H1 (cell line): ENCODE measurements at regions of chr10 and their contacts with region 1.

Region 1: DNA sequence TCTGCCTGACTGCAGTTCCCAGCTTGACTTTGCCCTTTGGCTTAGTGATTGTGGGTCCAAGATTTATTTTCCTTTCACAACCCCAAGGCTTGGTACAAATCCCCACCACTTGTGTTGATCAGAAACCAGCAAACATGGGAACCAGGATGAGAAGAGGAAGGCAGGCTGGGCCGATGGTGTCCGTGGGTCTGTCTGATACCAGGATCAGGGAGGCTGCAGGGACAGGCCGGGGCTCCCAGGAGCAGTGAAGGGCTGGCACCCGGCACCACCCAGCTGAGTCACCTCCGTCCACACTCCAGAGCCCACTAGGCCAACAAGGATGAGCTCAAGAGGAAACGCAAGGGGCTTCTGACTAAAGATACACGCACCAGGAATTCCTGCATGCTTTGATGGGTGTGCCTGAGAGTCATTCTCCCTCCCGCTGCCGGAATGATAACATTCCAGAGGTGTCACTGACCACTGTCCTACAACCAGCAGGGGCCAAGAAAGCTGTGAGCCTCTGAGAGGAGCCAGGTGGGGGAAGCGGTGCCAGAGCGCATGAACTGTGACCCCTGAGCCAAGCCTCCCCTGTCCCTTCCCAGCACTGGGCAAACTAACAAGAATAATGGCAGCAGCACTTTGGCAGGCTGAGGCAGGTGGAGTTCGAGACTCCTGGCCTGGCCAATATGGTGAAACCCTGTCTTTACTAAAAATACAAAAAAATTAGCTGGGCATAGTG is 29.2 kb upstream of the PROSER2 start:
- DNase-seq: no peak
- H3K4me3 ChIP-seq: no peak overlapping the region
- H3K27ac ChIP-seq: no peak overlapping the region
- H3K4me1 ChIP-seq: peaks cover 0 to 3% (median 0%) of the 10 kb centered on the region in 4 experiments; a peak in 1 of 7 replicates
- H3K27me3 ChIP-seq: no peaks in the 10 kb centered on the region
- CTCF ChIP-seq: no peak
- EP300 ChIP-seq: no peak
- POLR2A ChIP-seq: no peak
- RAD21 ChIP-seq: no peak

Region 2: DNA sequence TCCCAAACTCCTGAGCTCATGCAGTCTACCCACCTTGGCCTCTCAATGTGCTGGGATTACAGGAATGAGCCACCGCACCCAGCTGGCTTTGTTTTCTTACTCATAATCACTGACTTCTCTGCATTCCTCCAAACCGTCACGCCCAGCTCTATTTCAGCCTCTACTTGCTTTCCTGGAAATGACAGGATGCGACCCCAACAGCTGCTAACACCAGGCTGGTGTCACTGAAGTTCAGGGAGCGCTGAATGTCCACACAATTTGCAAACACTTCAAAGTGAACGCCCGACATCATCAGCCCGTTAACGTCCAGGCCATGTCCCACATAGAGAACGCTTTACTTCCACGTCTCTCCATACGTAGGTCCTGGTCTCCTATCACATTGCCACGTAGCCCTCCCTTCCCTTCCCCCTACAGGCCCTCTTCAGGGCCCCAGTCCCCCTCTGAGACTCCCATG is 16.4 kb after region 1 on chr10:
- CTCF ChIA-PET with region 1: interaction called, 12 read pairs
- POLR2A ChIA-PET with region 1: no interaction called
- DNase-seq: no peak
- H3K4me3 ChIP-seq: no peak overlapping the region
- H3K27ac ChIP-seq: no peak overlapping the region
- H3K4me1 ChIP-seq: peaks cover 0 to 7% (median under 1%) of the 10 kb centered on the region in 4 experiments; a peak in 2 of 7 replicates
- H3K27me3 ChIP-seq: no peaks in the 10 kb centered on the region
- CTCF ChIP-seq: no peak
- EP300 ChIP-seq: no peak
- POLR2A ChIP-seq: no peak
- RAD21 ChIP-seq: no peak

Region 3: GRCh38 chr10:11838298-11838852 is 44.5 kb after region 1 on chr10:
- CTCF ChIA-PET with region 1: no interaction called
- POLR2A ChIA-PET with region 1: no interaction called
- DNase-seq: no peak
- H3K4me3 ChIP-seq: no peak overlapping the region
- H3K27ac ChIP-seq: no peak overlapping the region
- H3K4me1 ChIP-seq: no peaks in the 10 kb centered on the region
- H3K27me3 ChIP-seq: no peaks in the 10 kb centered on the region
- CTCF ChIP-seq: no peak
- EP300 ChIP-seq: no peak
- POLR2A ChIP-seq: no peak
- RAD21 ChIP-seq: no peak

Region 4: GRCh38 chr10:11986593-11987216 is 192.8 kb after region 1 on chr10:
- CTCF ChIA-PET with region 1: interaction called, 32 read pairs
- POLR2A ChIA-PET with region 1: no interaction called
- DNase-seq: peak; percentile 27 to 84
- H3K4me3 ChIP-seq: no peak overlapping the region
- H3K27ac ChIP-seq: no peak overlapping the region
- H3K4me1 ChIP-seq: no peaks in the 10 kb centered on the region
- H3K27me3 ChIP-seq: no peaks in the 10 kb centered on the region
- CTCF ChIP-seq: peak; percentile 37 to 90 (median 82)
- EP300 ChIP-seq: no peak
- POLR2A ChIP-seq: no peak
- RAD21 ChIP-seq: peak; percentile 96